CD4-positive, alpha-beta memory T cell (primary cell): ENCODE measurements at regions of chr20 and their contacts with region 1.

Region 1: GRCh38 chr20:44598423-44599305 is 16.3 kb downstream of the PKIG start:
- DNase-seq: no peak
- H3K4me3 ChIP-seq: no peak overlapping the region
- H3K4me3 Mint-ChIP-seq: no peak overlapping the region
- H3K27ac ChIP-seq: no peak overlapping the region
- H3K27ac Mint-ChIP-seq: peak overlapping the region in 4 of 7 donors; percentile 14 to 83 (median 50)
- H3K4me1 ChIP-seq: peaks cover 7% of the 10 kb centered on the region
- H3K4me1 Mint-ChIP-seq: peaks cover 6 to 9% (median 9%) of the 10 kb centered on the region in 4 donors
- H3K27me3 ChIP-seq: no peaks in the 10 kb centered on the region
- H3K27me3 Mint-ChIP-seq: no peaks in the 10 kb centered on the region

Region 2: DNA sequence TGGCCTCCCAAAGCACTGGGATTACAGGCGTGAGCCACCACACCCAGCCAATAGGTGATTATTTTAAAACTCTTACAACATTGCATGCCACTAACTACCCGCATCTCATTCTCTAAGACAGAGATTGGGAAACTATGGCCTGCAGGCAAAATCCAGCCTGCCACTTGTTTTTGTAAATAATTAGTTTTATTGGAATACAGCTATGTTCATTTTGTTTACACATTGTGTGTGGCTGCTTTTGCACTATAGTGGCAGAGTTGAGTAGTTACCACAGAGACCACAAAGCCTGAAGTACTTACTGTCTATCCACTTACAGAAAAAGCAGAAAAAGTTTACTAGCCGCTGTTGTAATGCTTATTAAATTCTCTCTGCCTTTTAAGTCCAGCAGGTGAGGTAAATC is 32.7 kb before region 1 on chr20:
- CTCF ChIA-PET with region 1: no interaction called
- POLR2A ChIA-PET with region 1: no interaction called
- intact Hi-C with region 1: no loop called
- DNase-seq: no peak
- H3K4me3 ChIP-seq: no peak overlapping the region
- H3K4me3 Mint-ChIP-seq: no peak overlapping the region
- H3K27ac ChIP-seq: no peak overlapping the region
- H3K27ac Mint-ChIP-seq: no peak overlapping the region
- H3K4me1 ChIP-seq: no peaks in the 10 kb centered on the region
- H3K4me1 Mint-ChIP-seq: no peaks in the 10 kb centered on the region
- H3K27me3 ChIP-seq: no peaks in the 10 kb centered on the region
- H3K27me3 Mint-ChIP-seq: peaks cover 1% of the 10 kb centered on the region in 2 donors

Region 3: GRCh38 chr20:44609511-44610312 is 11.0 kb after region 1 on chr20:
- CTCF ChIA-PET with region 1: interaction called, 20 read pairs
- POLR2A ChIA-PET with region 1: no interaction called
- intact Hi-C with region 1: no loop called
- DNase-seq: peak; percentile 65 to 80 (median 74)
- H3K4me3 ChIP-seq: no peak overlapping the region
- H3K4me3 Mint-ChIP-seq: peak overlapping the region in 6 of 8 donors; percentile 62 to 77 (median 66)
- H3K27ac ChIP-seq: peak overlapping the region; percentile 23
- H3K27ac Mint-ChIP-seq: peak overlapping the region; percentile 17 to 98 (median 85)
- H3K4me1 ChIP-seq: peaks cover 12% of the 10 kb centered on the region
- H3K4me1 Mint-ChIP-seq: peaks cover 5 to 19% (median 12%) of the 10 kb centered on the region in 4 donors
- H3K27me3 ChIP-seq: no peaks in the 10 kb centered on the region
- H3K27me3 Mint-ChIP-seq: no peaks in the 10 kb centered on the region

Region 4: GRCh38 chr20:44946271-44946852 is 347.7 kb after region 1 on chr20:
- CTCF ChIA-PET with region 1: no interaction called
- POLR2A ChIA-PET with region 1: no interaction called
- intact Hi-C with region 1: no loop called
- DNase-seq: no peak
- H3K4me3 ChIP-seq: no peak overlapping the region
- H3K4me3 Mint-ChIP-seq: no peak overlapping the region
- H3K27ac ChIP-seq: no peak overlapping the region
- H3K27ac Mint-ChIP-seq: peak overlapping the region in 3 of 7 donors; percentile 31 to 76 (median 76)
- H3K4me1 ChIP-seq: no peaks in the 10 kb centered on the region
- H3K4me1 Mint-ChIP-seq: peaks cover 0 to 7% (median 3%) of the 10 kb centered on the region in 4 donors
- H3K27me3 ChIP-seq: no peaks in the 10 kb centered on the region
- H3K27me3 Mint-ChIP-seq: no peaks in the 10 kb centered on the region